ENCODE measurements at regions of chr1 and their contacts with region 1.

Region 1: GRCh38 chr1:47437447-47438164 is at the start of gene FOXD2:
- DNase-seq: peak; percentile 91
- H3K4me3 ChIP-seq: peak within 1 kb of the TSS; percentile 75
- H3K27ac ChIP-seq: peak within 1 kb of the TSS; percentile 58
- H3K4me1 ChIP-seq: peaks cover 22% of the 10 kb centered on the region
- H3K27me3 ChIP-seq: peaks cover 48% of the 10 kb centered on the region
- CTCF ChIP-seq: peak; percentile 84
- total RNA-seq, gene FOXD2: 0.15 and 0.17 TPM in 2 replicates

Region 2: DNA sequence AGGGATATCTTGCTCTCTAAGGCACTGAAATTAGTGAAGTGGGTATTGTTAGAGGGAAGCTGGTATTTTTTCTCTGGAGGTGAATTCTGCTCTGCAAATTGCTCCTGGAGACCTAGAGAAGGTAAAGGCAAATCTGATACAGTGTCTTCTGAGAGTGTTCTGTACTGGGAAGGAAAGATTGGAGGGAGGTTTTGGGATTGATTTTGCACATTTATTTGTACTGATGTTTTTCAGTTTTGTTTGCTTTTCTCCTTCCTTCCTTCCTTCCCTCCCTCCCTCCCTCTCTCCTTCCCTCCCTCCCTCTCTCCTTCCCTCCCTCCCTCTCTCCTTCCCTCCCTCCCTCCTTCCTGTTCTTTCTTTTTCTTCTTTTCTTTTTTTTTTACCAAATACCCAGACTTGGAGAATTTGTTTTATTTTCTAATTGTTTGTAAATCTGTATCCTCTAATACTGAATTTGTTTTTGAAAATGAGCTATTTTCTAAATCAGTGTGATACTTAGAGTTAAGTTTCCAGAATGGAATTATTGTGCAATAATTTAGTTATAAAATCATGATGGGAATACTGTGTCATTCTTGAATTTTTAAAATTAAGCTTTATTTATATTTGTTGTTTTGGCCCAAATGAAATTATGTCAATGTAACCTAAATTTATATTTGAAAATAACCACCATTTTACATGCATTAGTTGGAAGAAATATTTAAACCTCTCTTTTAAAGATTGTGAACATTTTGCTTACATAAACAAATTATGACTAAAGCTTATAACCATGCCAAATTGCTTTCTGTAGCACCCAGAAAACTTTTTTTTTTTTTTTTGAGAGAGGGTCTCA is 99.1 kb before region 1 on chr1:
- CTCF ChIA-PET with region 1: interaction called, 4 read pairs
- POLR2A ChIA-PET with region 1: interaction called, 27 read pairs
- intact Hi-C with region 1: no loop called
- DNase-seq: no peak
- H3K4me3 ChIP-seq: no peak overlapping the region
- H3K27ac ChIP-seq: no peak overlapping the region
- H3K4me1 ChIP-seq: peaks cover 6% of the 10 kb centered on the region
- H3K27me3 ChIP-seq: no peaks in the 10 kb centered on the region
- CTCF ChIP-seq: no peak

Region 3: DNA sequence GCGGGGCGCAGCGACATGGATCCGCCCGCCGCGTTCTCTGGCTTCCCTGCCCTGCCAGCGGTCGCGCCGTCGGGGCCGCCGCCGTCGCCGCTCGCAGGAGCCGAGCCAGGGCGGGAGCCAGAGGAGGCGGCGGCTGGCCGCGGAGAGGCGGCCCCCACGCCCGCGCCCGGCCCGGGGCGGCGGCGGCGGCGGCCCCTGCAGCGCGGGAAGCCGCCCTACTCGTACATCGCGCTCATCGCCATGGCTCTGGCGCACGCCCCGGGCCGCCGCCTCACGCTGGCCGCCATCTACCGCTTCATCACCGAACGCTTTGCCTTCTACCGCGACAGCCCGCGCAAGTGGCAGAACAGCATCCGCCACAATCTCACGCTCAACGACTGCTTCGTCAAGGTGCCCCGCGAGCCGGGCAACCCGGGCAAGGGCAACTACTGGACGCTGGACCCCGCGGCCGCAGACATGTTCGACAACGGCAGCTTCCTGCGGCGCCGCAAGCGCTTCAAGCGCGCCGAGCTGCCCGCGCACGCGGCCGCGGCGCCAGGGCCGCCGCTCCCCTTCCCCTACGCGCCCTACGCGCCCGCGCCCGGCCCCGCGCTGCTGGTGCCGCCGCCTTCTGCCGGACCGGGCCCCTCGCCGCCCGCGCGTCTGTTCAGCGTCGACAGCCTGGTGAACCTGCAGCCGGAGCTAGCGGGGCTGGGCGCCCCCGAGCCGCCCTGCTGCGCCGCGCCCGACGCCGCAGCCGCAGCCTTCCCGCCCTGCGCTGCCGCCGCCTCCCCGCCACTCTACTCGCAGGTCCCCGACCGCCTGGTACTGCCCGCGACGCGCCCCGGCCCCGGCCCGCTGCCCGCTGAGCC is 21.1 kb before region 1 on chr1:
- CTCF ChIA-PET with region 1: no interaction called
- POLR2A ChIA-PET with region 1: no interaction called
- intact Hi-C with region 1: no loop called
- DNase-seq: no peak
- H3K4me3 ChIP-seq: no peak overlapping the region
- H3K27ac ChIP-seq: no peak overlapping the region
- H3K4me1 ChIP-seq: no peaks in the 10 kb centered on the region
- H3K27me3 ChIP-seq: peaks cover 70% of the 10 kb centered on the region
- CTCF ChIP-seq: no peak

Region 4: GRCh38 chr1:47547753-47548573 is 110.4 kb after region 1 on chr1:
- CTCF ChIA-PET with region 1: interaction called, 10 read pairs
- POLR2A ChIA-PET with region 1: no interaction called
- intact Hi-C with region 1: no loop called
- DNase-seq: no peak
- H3K4me3 ChIP-seq: no peak overlapping the region
- H3K27ac ChIP-seq: no peak overlapping the region
- H3K4me1 ChIP-seq: no peaks in the 10 kb centered on the region
- H3K27me3 ChIP-seq: peaks cover 14% of the 10 kb centered on the region
- CTCF ChIP-seq: no peak

Region 5: GRCh38 chr1:47587891-47588582 is 150.4 kb after region 1 on chr1:
- CTCF ChIA-PET with region 1: no interaction called
- POLR2A ChIA-PET with region 1: no interaction called
- intact Hi-C with region 1: loop called (anchors 10 kb)
- DNase-seq: no peak
- H3K4me3 ChIP-seq: no peak overlapping the region
- H3K27ac ChIP-seq: no peak overlapping the region
- H3K4me1 ChIP-seq: no peaks in the 10 kb centered on the region
- H3K27me3 ChIP-seq: peaks cover 66% of the 10 kb centered on the region
- CTCF ChIP-seq: no peak

Region 6: DNA sequence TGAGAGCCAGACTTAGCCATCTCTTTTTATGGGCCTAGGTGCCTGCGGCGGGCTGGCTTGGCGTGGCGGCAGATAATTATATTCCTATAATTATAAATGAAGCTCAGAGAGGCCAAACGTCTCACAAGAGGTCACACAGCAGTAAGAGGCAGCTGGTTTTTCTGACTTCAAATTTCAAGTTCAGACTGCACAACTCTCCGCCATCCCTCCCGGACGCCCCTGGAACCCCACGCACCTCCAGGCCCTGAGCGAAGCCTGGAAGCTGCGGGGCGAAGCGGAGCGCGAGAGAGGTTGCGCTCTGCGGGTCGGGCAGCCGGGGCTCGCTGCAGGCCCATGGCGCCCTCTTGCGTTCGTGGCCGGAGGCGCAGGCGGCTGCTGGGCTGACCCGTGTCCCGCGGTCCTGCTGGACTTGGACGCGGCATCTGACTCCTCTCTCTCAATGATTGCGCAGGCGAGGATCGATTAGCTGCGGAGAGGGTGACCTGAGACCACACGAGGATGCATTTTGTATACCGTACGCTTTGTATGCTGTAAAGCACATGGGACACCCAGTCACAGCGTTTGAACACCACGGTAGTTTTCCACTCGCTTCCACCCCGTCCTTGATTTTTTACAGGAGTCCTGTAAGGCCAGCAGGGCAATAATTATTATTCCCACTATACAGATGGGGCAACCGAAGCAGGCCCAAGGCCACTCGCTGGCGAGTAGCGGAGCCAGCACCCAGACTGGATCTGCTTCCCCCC is 272.9 kb after region 1 on chr1:
- CTCF ChIA-PET with region 1: interaction called, 44 read pairs
- POLR2A ChIA-PET with region 1: no interaction called
- intact Hi-C with region 1: loop called (anchors 1 kb)
- DNase-seq: peak; percentile 58
- H3K4me3 ChIP-seq: peak overlapping the region; percentile 34
- H3K27ac ChIP-seq: no peak overlapping the region
- H3K4me1 ChIP-seq: peaks cover 17% of the 10 kb centered on the region
- H3K27me3 ChIP-seq: peaks cover 95% of the 10 kb centered on the region
- CTCF ChIP-seq: peak; percentile 97

Region 7: GRCh38 chr1:47725992-47726855 is 288.6 kb after region 1 on chr1:
- CTCF ChIA-PET with region 1: interaction called, 74 read pairs
- POLR2A ChIA-PET with region 1: no interaction called
- intact Hi-C with region 1: loop called (anchors 1 kb)
- DNase-seq: peak; percentile 81
- H3K4me3 ChIP-seq: no peak overlapping the region
- H3K27ac ChIP-seq: no peak overlapping the region
- H3K4me1 ChIP-seq: no peaks in the 10 kb centered on the region
- H3K27me3 ChIP-seq: peaks cover 33% of the 10 kb centered on the region
- CTCF ChIP-seq: peak; percentile 91

Measured in A673 (cell line).